Right cardiac atrium (tissue), 5 donors: ENCODE measurements at regions of chr17 and their contacts with region 1.

Region 1: DNA sequence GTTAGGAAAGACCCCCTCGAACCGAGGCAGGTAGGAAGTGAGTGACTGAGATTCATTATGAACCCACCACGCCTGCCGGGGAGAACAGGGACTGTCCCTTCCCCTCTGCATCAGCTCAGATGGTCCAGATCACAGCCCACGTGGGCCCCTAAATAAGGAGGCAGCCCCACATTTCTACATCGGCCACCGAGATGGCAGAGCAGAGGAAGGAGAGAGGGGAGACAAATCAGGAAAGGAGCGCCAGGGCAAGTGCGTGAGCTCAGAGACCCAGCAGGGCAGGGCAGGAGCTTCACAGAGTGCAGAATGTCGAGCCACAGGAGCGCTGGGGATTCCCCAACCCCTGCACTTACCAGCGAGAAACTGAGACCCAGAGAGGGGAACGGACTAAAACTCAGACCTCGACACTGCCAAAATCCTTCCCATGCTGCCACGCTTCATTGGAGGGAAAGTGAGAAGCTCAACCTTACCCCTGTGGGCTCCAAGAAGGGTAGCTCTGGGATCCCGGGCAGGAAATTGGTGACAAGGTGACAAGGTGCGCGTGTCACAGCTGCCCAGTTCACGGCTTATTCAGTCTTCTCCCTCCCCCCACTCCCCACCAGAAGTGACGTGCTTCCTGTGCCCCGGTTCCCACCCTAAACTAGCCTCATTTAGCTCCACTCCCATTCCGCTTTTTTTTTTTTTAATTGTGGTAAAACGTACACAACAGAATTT is at the start of gene ICAM2:
- DNase-seq: peak; percentile 73 to 87 (median 85)
- ATAC-seq: peak; percentile 86 to 94
- H3K4me3 ChIP-seq: peak within 1 kb of the TSS; percentile 57
- H3K27ac ChIP-seq: peak within 1 kb of the TSS; percentile 77
- H3K4me1 ChIP-seq: peaks cover 4% of the 10 kb centered on the region
- H3K27me3 ChIP-seq: no peaks in the 10 kb centered on the region
- total RNA-seq, gene ICAM2: 17.6 to 31.7 (median 26.3) TPM

Region 2: DNA sequence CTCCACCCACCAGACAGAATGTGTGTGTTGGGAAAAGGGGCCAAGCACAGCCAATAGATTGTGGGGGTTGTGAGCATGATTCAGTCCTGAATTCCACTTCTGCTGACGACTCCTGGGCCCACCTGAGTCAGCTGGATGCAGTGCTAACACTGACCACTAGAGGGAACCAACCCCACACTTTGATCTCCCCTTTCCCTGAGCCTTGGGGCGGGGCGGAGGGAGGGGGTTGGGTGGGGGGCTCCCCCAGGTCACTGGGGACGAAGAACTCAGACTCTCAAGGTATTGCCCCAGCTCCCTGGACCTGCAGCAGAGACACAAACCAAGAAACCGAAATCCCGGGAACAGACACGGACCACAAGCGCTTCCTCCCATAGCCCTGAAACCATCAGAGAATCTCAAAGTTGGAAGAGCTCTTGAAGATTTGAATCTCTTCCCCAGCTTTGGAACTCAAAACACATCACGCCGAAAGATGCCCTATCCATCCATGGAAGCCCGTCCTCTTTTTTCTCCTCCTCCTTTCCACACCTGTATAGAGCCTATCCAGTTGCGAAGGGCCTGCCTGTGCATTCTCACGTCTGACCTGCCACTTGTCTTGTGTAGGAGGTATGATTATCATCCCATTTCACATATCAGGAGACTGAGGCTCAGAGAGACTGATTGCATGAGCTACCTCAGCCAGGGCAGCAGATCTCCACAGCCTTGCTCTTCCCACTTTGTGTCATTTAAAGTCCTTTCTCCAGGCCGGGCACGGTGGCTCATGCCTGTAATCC is 108.4 kb before region 1 on chr17:
- intact Hi-C with region 1: loop called in 3 of 4 experiments (anchors 5 to 10 kb)
- DNase-seq: peak in 1 of 3 donors; percentile 47
- ATAC-seq: peak in 1 of 2 donors; percentile 66
- H3K4me3 ChIP-seq: no peak overlapping the region
- H3K27ac ChIP-seq: no peak overlapping the region
- H3K4me1 ChIP-seq: no peaks in the 10 kb centered on the region
- H3K27me3 ChIP-seq: no peaks in the 10 kb centered on the region

Region 3: GRCh38 chr17:64103391-64104364 is 83.5 kb after region 1 on chr17:
- intact Hi-C with region 1: no loop called
- DNase-seq: no peak
- ATAC-seq: no peak
- H3K4me3 ChIP-seq: no peak overlapping the region
- H3K27ac ChIP-seq: no peak overlapping the region
- H3K4me1 ChIP-seq: no peaks in the 10 kb centered on the region
- H3K27me3 ChIP-seq: no peaks in the 10 kb centered on the region